ENCODE measurements at regions of chr9 and their contacts with region 1.

Region 1: DNA sequence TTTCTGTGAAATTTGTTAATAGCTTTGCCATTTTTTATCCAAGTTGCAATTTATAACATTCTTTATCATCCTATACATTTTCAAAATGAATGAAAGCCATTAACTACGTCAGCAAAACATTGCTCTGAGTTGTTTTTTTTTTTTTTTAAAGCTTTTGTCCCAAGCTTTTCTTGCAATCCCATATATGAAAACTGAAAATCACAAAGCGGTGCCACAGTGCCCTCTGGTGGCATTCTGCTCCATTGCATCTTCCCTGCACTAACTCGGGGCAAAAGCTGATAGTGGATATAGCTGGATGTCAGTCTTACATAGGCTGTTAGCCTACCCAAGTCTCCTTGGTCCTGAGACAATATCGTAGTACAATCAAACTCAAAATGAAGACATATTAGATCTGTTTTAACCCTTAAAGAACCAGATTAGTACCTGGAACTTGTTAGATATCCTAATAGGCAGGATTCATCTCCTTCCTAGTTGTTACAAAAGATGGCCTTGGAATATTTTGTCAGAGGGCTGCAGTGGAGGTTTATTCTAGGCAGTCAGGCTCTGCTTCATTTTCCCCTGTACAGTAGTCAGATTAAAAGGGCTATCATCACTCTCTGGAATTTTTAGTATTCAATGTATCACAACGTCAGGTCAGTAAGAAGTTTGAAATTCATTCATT is 669.9 kb downstream of the PTPRD start:
- H3K4me3 ChIP-seq: no peak overlapping the region
- H3K27ac ChIP-seq: no peak overlapping the region
- H3K4me1 ChIP-seq: no peaks in the 10 kb centered on the region
- CTCF ChIP-seq: no peak

Region 2: GRCh38 chr9:8907863-8908262 is 1035.0 kb before region 1 on chr9:
- CTCF ChIA-PET with region 1: no interaction called
- POLR2A ChIA-PET with region 1: no interaction called
- H3K4me3 ChIP-seq: no peak overlapping the region
- H3K27ac ChIP-seq: no peak overlapping the region
- H3K4me1 ChIP-seq: no peaks in the 10 kb centered on the region
- CTCF ChIP-seq: no peak

Region 3: DNA sequence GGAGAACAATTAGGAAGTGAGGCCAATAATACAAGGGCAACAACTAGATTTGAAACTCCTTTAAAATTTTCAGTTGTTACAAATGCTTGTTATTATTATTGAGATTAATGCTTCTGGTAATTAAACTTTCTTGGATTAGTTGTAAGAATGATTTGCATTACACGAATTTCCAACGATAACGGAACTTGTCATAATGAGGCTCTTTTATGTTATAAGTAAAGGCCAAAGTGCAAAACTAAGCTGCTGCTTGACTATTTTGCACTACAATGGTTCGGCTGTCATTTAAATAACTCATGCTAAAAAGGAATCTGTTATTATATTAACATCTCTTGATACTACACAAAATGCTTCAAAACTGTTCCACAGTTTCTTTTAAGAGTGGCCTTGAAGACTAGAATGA is 337.2 kb before region 1 on chr9:
- CTCF ChIA-PET with region 1: interaction called, 32 read pairs
- POLR2A ChIA-PET with region 1: no interaction called
- H3K4me3 ChIP-seq: no peak overlapping the region
- H3K27ac ChIP-seq: no peak overlapping the region
- H3K4me1 ChIP-seq: no peaks in the 10 kb centered on the region
- CTCF ChIP-seq: no peak

Region 4: GRCh38 chr9:9790216-9790872 is 152.6 kb before region 1 on chr9:
- CTCF ChIA-PET with region 1: interaction called, 34 read pairs
- POLR2A ChIA-PET with region 1: no interaction called
- H3K4me3 ChIP-seq: no peak overlapping the region
- H3K27ac ChIP-seq: no peak overlapping the region
- H3K4me1 ChIP-seq: no peaks in the 10 kb centered on the region
- CTCF ChIP-seq: no peak

Region 5: DNA sequence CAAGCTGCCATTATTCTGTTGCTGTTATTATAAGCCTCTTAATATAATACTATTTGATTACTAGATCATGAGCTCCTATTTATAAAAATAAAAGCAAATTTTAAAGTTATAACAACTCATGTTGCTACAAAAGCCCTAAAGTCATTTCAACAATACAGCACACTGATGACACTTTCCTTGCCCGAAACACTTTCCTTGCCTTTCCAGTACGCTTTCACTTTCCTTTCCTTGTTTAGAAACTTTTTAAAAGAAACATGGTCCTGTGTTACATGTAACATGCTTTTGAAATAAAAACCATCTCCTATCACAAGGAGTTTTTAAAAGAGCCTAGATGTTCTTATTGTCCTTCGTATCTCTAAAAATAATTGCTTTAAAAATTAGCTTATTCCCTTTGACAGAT is 18.5 kb before region 1 on chr9:
- CTCF ChIA-PET with region 1: interaction called, 11 read pairs
- POLR2A ChIA-PET with region 1: no interaction called
- H3K4me3 ChIP-seq: no peak overlapping the region
- H3K27ac ChIP-seq: no peak overlapping the region
- H3K4me1 ChIP-seq: no peaks in the 10 kb centered on the region
- CTCF ChIP-seq: no peak

Region 6: GRCh38 chr9:9998491-9999287 is 55.8 kb after region 1 on chr9:
- CTCF ChIA-PET with region 1: no interaction called
- POLR2A ChIA-PET with region 1: no interaction called
- H3K4me3 ChIP-seq: no peak overlapping the region
- H3K27ac ChIP-seq: no peak overlapping the region
- H3K4me1 ChIP-seq: no peaks in the 10 kb centered on the region
- CTCF ChIP-seq: no peak

Measured in HEK293 (cell line).